HCT116 (cell line): ENCODE measurements at regions of chr12 and their contacts with region 1.

Region 1: DNA sequence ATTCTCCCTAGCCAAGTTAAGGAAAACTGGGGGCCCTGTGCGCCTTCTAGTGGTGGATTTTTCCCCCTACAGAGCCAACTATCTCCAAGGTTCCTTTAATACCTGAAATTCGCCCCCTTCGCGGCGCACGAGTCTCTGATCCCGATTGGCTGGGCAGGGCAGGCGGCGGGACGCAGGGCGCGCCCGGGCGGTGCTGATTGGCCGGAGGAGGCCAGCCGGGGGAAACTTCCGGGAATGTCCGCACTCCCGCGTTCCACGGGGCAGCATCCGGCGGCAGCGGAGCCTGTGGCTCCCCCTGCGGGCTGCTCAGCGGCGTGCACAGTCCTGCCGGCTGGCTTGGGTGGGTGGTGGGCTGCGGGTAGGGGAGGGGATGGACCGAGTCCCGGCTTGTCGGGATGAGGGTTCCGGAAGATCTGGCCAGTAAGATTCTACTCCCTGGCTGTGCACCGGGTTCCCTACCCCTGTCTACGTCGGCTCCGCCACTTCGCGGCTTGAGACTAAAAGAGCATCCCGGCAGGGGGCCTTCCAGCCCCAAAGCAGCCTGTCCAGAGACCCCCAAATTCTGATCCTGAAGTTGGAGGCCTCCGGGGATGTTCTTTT is at the start of gene NABP2:
- DNase-seq: peak; percentile 94
- ATAC-seq: peak; percentile 80
- H3K4me3 ChIP-seq: peak within 1 kb of the TSS; percentile 85 to 91
- H3K27ac ChIP-seq: peak within 1 kb of the TSS; percentile 82
- H3K4me1 ChIP-seq: peaks cover 8 to 35% of the 10 kb centered on the region in 2 experiments; a peak in 3 of 4 replicates
- H3K27me3 ChIP-seq: no peaks in the 10 kb centered on the region
- CTCF ChIP-seq: peak; percentile 72 to 97 (median 78)
- POLR2A ChIP-seq: no peak
- RAD21 ChIP-seq: peak; percentile 74
- total RNA-seq, gene NABP2: 52.9 TPM

Region 2: GRCh38 chr12:56206457-56207166 is 17.6 kb before region 1 on chr12:
- CTCF ChIA-PET with region 1: interaction called, 11 read pairs
- POLR2A ChIA-PET with region 1: interaction called, 13 read pairs
- RAD21 ChIA-PET with region 1: interaction called in 1 of 2 experiments, 5 read pairs
- intact Hi-C with region 1: loop called (anchors 2 kb)
- DNase-seq: no peak
- ATAC-seq: peak; percentile 92
- H3K4me3 ChIP-seq: no peak overlapping the region
- H3K27ac ChIP-seq: no peak overlapping the region
- H3K4me1 ChIP-seq: no peaks in the 10 kb centered on the region
- H3K27me3 ChIP-seq: no peaks in the 10 kb centered on the region
- CTCF ChIP-seq: peak; percentile 69 to 82 (median 74); a peak in 5 of 6 replicates
- POLR2A ChIP-seq: no peak
- RAD21 ChIP-seq: peak; percentile 74

Region 3: GRCh38 chr12:56258057-56258819 is 34.0 kb after region 1 on chr12 and contains the start of gene ANKRD52:
- CTCF ChIA-PET with region 1: no interaction called
- POLR2A ChIA-PET with region 1: interaction called, 3 read pairs
- RAD21 ChIA-PET with region 1: no interaction called
- intact Hi-C with region 1: loop called (anchors 5 kb)
- DNase-seq: no peak
- ATAC-seq: peak; percentile 79
- H3K4me3 ChIP-seq: peak within 1 kb of the TSS; percentile 71 to 89
- H3K27ac ChIP-seq: peak within 1 kb of the TSS; percentile 82
- H3K4me1 ChIP-seq: peaks cover 26 to 52% of the 10 kb centered on the region in 2 experiments
- H3K27me3 ChIP-seq: no peaks in the 10 kb centered on the region
- CTCF ChIP-seq: peak; percentile 5 to 52 (median 44); a peak in 3 of 6 replicates
- POLR2A ChIP-seq: no peak
- RAD21 ChIP-seq: no peak
- total RNA-seq, gene ANKRD52: 56.6 TPM

Region 4: DNA sequence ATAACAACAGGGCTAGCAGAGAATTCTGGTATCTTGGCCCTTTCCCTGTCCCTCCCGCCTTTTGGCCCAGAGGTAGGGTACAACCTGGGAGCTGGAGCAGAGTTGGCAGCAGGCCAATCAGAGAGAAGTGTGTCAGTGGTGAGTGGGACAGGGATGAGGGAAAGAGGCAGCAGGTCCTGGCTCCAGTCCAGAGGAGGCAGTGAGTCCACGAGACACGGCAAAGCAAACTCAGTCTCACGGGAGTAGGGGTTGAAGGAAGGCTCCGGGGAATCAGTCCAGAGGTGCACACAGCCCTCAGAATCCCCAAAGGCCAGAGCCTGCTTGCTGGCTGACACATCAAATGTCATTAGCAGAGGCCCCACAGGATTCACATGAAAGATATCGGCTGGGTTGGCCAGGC is 102.3 kb after region 1 on chr12:
- CTCF ChIA-PET with region 1: no interaction called
- POLR2A ChIA-PET with region 1: no interaction called
- RAD21 ChIA-PET with region 1: no interaction called
- intact Hi-C with region 1: no loop called
- DNase-seq: no peak
- ATAC-seq: no peak
- H3K4me3 ChIP-seq: no peak overlapping the region
- H3K27ac ChIP-seq: no peak overlapping the region
- H3K4me1 ChIP-seq: peaks cover 5 to 9% of the 10 kb centered on the region in 2 experiments; a peak in 2 of 4 replicates
- H3K27me3 ChIP-seq: no peaks in the 10 kb centered on the region
- CTCF ChIP-seq: no peak
- POLR2A ChIP-seq: no peak
- RAD21 ChIP-seq: no peak